Breast epithelium (tissue), 4 donors: ENCODE measurements at regions of chr1 and their contacts with region 1.

Region 1: GRCh38 chr1:34650800-34651199 is 104.0 kb upstream of the GJB5 start:
- DNase-seq: no peak
- H3K4me3 ChIP-seq: no peak overlapping the region
- H3K27ac ChIP-seq: no peak overlapping the region
- H3K4me1 ChIP-seq: no peaks in the 10 kb centered on the region
- H3K27me3 ChIP-seq: peaks cover 0 to 57% of the 10 kb centered on the region in 2 donors
- CTCF ChIP-seq: no peak
- POLR2A ChIP-seq: no peak

Region 2: GRCh38 chr1:34591751-34592628 is 58.8 kb before region 1 on chr1:
- intact Hi-C with region 1: loop called (anchors 2 kb)
- DNase-seq: no peak
- H3K4me3 ChIP-seq: no peak overlapping the region
- H3K27ac ChIP-seq: no peak overlapping the region
- H3K4me1 ChIP-seq: no peaks in the 10 kb centered on the region
- H3K27me3 ChIP-seq: no peaks in the 10 kb centered on the region
- CTCF ChIP-seq: no peak
- POLR2A ChIP-seq: no peak